Activated CD4-positive, alpha-beta T cell treated with anti-CD3 and anti-CD28 coated beads, Interleukin-2, amount 10 ng/mL, durations not matched to agents 24 days and 14 days (primary cell): ENCODE measurements at regions of chr16 and their contacts with region 1.

Region 1: DNA sequence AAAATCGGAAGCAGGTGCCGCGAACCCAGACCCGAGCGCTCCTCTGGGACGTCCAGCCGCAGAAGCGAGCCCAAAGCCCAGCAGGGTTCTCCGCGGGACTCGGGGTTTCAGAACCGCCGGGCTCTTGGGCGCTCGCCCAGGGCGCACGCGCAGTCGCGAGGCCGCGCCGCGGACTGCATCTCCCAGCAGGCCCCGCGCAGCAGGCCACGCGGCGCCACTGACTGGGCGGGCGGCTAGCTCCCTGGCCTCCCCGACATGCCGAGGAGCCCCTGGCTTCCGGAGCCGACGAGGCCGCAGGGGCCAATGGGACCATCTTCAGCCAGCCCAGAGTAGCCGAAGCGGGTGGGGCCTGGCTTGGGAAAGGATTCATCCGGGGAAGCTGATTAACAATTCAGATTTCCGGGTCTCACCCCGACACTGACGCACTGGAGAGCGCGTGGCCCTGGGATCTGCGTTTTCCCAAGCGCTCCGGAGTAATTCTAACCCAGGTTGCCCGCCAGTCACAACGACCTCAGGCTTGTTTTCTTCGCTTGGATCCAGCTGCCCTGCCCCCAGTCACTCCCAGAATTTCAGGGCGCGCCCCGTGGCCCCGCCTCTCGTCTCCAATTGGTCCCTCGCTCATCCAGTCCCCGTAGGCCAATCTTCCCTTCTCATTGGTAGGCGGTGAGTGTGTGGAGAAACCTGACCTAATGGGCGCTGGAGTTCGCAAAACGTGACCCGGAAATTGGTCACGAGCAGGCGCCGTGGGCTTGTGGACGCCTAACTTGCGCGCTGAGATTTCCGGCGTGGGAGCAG is at the start of gene ZNF263:
- DNase-seq: peak; percentile 98
- H3K4me3 Mint-ChIP-seq: peak within 1 kb of the TSS; percentile 88
- H3K27ac Mint-ChIP-seq: peak within 1 kb of the TSS; percentile 98
- H3K4me1 Mint-ChIP-seq: peaks cover 18% of the 10 kb centered on the region
- H3K27me3 Mint-ChIP-seq: peaks cover 4% of the 10 kb centered on the region
- total RNA-seq, gene ZNF263: 27.0 and 31.3 TPM in 2 replicates

Region 2: DNA sequence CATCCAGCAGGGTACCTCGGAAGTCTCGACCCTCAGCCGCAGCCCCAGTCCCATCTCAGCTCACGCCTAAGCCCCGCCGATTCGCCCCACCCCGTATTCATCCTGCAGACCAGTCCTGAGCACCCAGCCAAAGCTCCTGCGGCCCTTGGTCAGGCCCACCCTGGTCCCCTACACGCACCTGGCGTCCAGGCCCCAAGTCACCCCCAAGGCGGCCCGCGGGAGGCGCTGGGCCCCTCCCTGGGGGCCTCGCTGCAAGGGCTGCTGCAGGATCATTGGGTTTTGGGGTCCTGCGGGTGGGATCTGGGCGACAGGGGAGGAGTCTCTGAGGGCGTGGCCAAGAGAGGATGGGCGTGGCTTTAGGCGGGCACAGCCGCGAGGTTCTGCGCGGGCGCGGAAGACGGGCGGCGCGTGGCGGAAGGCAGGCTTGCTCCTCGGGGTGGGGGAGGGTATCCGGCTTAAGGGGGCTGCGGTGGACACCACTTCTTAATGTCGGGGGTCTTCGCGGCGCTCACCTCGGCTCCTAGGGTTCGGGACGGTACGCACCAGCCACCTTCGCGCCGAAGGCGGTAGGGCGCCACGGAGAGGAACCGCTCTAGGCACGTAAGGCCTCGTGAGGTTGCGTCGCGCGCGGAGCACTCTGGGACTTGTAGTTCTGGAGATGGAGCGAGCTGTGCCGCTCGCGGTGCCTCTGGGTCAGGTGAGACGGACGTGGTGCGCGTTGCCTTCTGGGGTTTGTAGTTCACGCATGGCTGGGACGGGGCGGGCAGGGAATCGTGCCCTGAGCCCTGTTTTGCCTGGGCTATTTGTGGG is 259.1 kb before region 1 on chr16 and contains the starts of genes HCFC1R1 and THOC6:
- intact Hi-C with region 1: loop called (anchors 10 kb)
- DNase-seq: peak; percentile 99
- H3K4me3 Mint-ChIP-seq: peak within 1 kb of the TSS; percentile 83
- H3K27ac Mint-ChIP-seq: peak within 1 kb of the TSS; percentile 95
- H3K4me1 Mint-ChIP-seq: peaks cover 45% of the 10 kb centered on the region
- H3K27me3 Mint-ChIP-seq: peaks cover 2% of the 10 kb centered on the region
- total RNA-seq, gene HCFC1R1: 29.4 TPM in 2 replicates
- total RNA-seq, gene THOC6: 55.3 and 57.0 TPM in 2 replicates

Region 3: DNA sequence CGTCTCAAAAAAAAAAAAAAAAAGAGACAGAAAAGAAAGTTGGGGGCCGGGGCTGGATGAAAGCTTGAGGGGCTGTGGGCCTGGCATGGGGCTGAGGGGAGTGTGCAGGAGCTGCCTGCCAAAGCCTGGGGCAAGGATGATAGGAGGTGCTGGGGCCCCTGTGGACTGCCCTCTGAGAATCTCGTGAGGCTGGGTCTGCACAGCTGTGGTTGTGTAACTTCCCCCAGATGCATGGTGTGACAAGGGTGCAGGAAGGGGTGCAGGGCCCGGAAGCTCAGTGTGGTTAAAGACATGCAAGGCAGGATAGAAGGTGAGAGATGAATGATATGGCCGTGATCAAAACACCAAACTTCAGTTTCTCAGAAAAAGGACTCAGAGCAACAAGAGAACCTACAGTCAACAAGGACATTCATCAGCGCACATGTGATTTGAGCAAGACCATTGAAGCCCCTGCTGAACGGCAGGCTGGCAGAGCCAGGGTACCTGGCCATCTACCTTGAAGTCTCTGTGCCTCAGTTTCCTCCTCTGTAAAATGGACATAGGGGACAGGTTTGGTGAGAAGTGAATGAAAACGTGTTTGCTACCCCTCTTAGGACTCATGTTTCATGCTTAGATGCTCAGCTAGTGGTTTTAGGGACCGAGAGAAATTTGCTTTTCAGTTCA is 207.9 kb before region 1 on chr16:
- intact Hi-C with region 1: no loop called
- DNase-seq: peak; percentile 96
- H3K4me3 Mint-ChIP-seq: peak overlapping the region; percentile 80
- H3K27ac Mint-ChIP-seq: peak overlapping the region; percentile 99
- H3K4me1 Mint-ChIP-seq: peaks cover 71% of the 10 kb centered on the region
- H3K27me3 Mint-ChIP-seq: no peaks in the 10 kb centered on the region

Region 4: DNA sequence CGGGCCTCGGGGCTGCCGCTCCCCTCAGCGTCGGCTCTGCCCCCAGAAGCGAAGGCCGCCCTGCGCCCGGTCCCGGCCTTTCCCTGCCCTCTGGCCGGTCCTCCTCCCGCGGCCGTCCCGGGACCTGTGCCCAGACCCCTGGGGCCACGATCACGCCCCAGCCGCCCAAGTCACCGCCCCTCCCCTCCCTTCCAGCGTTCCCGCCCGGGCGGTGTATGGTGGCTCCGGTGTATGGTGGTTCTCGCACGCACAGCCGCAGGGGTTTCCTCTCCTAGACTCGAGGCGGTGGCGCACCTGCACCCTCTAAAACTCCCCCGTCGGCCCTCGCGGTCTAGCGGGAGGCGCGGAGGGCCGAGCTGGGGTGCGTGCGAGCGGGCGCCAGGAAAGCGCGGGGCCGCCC is 12.3 kb after region 1 on chr16:
- intact Hi-C with region 1: no loop called
- DNase-seq: no peak
- H3K4me3 Mint-ChIP-seq: no peak overlapping the region
- H3K27ac Mint-ChIP-seq: no peak overlapping the region
- H3K4me1 Mint-ChIP-seq: no peaks in the 10 kb centered on the region
- H3K27me3 Mint-ChIP-seq: no peaks in the 10 kb centered on the region

Region 5: GRCh38 chr16:3305109-3306068 is 22.5 kb after region 1 on chr16 and contains the starts of genes TIGD7 and ZNF75A:
- intact Hi-C with region 1: loop called (anchors 1 kb)
- DNase-seq: peak; percentile 94
- H3K4me3 Mint-ChIP-seq: peak within 1 kb of the TSS; percentile 80
- H3K27ac Mint-ChIP-seq: peak within 1 kb of the TSS; percentile 79
- H3K4me1 Mint-ChIP-seq: peaks cover 7% of the 10 kb centered on the region
- H3K27me3 Mint-ChIP-seq: no peaks in the 10 kb centered on the region
- total RNA-seq, gene TIGD7: 2.3 and 3.2 TPM in 2 replicates
- total RNA-seq, gene ZNF75A: 26.5 and 33.5 TPM in 2 replicates

Region 6: GRCh38 chr16:3383045-3383448 is 100.1 kb after region 1 on chr16:
- intact Hi-C with region 1: no loop called
- DNase-seq: no peak
- H3K4me3 Mint-ChIP-seq: no peak overlapping the region
- H3K27ac Mint-ChIP-seq: no peak overlapping the region
- H3K4me1 Mint-ChIP-seq: no peaks in the 10 kb centered on the region
- H3K27me3 Mint-ChIP-seq: no peaks in the 10 kb centered on the region

Region 7: GRCh38 chr16:3400779-3401688 is 118.1 kb after region 1 on chr16 and contains the starts of genes ZNF174 and ZSCAN32:
- intact Hi-C with region 1: loop called (anchors 1 kb)
- DNase-seq: peak; percentile 100
- H3K4me3 Mint-ChIP-seq: peak within 1 kb of the TSS; percentile 90
- H3K27ac Mint-ChIP-seq: peak within 1 kb of the TSS; percentile 86
- H3K4me1 Mint-ChIP-seq: peaks cover 20% of the 10 kb centered on the region
- H3K27me3 Mint-ChIP-seq: no peaks in the 10 kb centered on the region
- total RNA-seq, gene ZNF174: 10.1 and 11.4 TPM in 2 replicates
- total RNA-seq, gene ZSCAN32: 16.8 and 17.9 TPM in 2 replicates

Region 8: GRCh38 chr16:3443108-3444031 is 160.4 kb after region 1 on chr16 and contains the starts of genes NAA60 and ZNF597:
- intact Hi-C with region 1: loop called (anchors 2 kb)
- DNase-seq: peak; percentile 94
- H3K4me3 Mint-ChIP-seq: peak within 1 kb of the TSS; percentile 90
- H3K27ac Mint-ChIP-seq: peak within 1 kb of the TSS; percentile 96
- H3K4me1 Mint-ChIP-seq: peaks cover 17% of the 10 kb centered on the region
- H3K27me3 Mint-ChIP-seq: no peaks in the 10 kb centered on the region
- total RNA-seq, gene NAA60: 31.4 and 34.7 TPM in 2 replicates
- total RNA-seq, gene ZNF597: 1.9 and 2.1 TPM in 2 replicates